IMR-90 (cell line): ENCODE measurements at regions of chr4 and their contacts with region 1.

Region 1: DNA sequence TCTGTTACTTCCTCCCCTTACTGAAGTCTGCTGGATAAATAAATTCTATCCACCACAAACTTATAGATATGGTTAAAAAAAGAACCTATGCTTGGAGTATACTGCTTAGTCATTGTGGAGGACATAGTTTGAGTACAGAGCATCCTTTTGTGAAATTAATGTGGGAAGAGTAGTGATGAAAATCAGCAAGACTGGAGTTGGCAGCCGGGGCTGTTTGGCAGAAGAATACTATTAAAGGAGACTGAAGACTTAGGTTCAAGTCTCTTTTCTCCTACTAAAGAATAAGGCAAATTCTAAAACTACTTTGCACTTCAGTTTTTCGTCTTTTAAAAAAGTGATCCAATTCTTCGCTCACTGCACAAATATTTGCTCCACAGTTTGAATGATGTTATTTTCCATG is 326.6 kb upstream of the ATOH1 start:
- DNase-seq: peak; percentile 46
- ATAC-seq: no peak; the same call in 1 of the 2 replicates
- H3K4me3 ChIP-seq: no peak overlapping the region
- H3K27ac ChIP-seq: no peak overlapping the region
- H3K4me1 ChIP-seq: no peaks in the 10 kb centered on the region
- H3K27me3 ChIP-seq: no peaks in the 10 kb centered on the region
- CTCF ChIP-seq: no peak
- POLR2A ChIP-seq: no peak
- RAD21 ChIP-seq: no peak

Region 2: GRCh38 chr4:93355411-93355810 is 146.5 kb before region 1 on chr4:
- CTCF ChIA-PET with region 1: no interaction called
- POLR2A ChIA-PET with region 1: no interaction called
- dilution Hi-C with region 1: no loop called
- in situ Hi-C with region 1: no loop called
- intact Hi-C with region 1: loop called (anchors 5 kb)
- DNase-seq: no peak
- ATAC-seq: no peak
- H3K4me3 ChIP-seq: no peak overlapping the region
- H3K27ac ChIP-seq: no peak overlapping the region
- H3K4me1 ChIP-seq: no peaks in the 10 kb centered on the region
- H3K27me3 ChIP-seq: no peaks in the 10 kb centered on the region
- CTCF ChIP-seq: no peak
- POLR2A ChIP-seq: no peak
- RAD21 ChIP-seq: no peak

Region 3: GRCh38 chr4:93437991-93438390 is 64.0 kb before region 1 on chr4:
- CTCF ChIA-PET with region 1: no interaction called
- POLR2A ChIA-PET with region 1: no interaction called
- dilution Hi-C with region 1: no loop called
- in situ Hi-C with region 1: no loop called
- intact Hi-C with region 1: no loop called
- DNase-seq: no peak
- ATAC-seq: no peak
- H3K4me3 ChIP-seq: no peak overlapping the region
- H3K27ac ChIP-seq: no peak overlapping the region
- H3K4me1 ChIP-seq: no peaks in the 10 kb centered on the region
- H3K27me3 ChIP-seq: no peaks in the 10 kb centered on the region
- CTCF ChIP-seq: no peak
- POLR2A ChIP-seq: no peak
- RAD21 ChIP-seq: no peak

Region 4: GRCh38 chr4:93855926-93856325 is 354.0 kb after region 1 on chr4:
- CTCF ChIA-PET with region 1: no interaction called
- POLR2A ChIA-PET with region 1: no interaction called
- dilution Hi-C with region 1: no loop called
- in situ Hi-C with region 1: no loop called
- intact Hi-C with region 1: no loop called
- DNase-seq: no peak
- ATAC-seq: no peak
- H3K4me3 ChIP-seq: no peak overlapping the region
- H3K27ac ChIP-seq: no peak overlapping the region
- H3K4me1 ChIP-seq: no peaks in the 10 kb centered on the region
- H3K27me3 ChIP-seq: no peaks in the 10 kb centered on the region
- CTCF ChIP-seq: no peak
- POLR2A ChIP-seq: no peak
- RAD21 ChIP-seq: no peak